Activated CD4-positive, alpha-beta T cell treated with anti-CD3 and anti-CD28 coated beads for 36 hours (primary cell): ENCODE measurements at regions of chr20 and their contacts with region 1.

Region 1: GRCh38 chr20:50958615-50959542 is at the start of gene MOCS3:
- DNase-seq: peak; percentile 89
- ATAC-seq: peak; percentile 82
- H3K4me3 Mint-ChIP-seq: peak within 1 kb of the TSS; percentile 99
- H3K27ac Mint-ChIP-seq: peak within 1 kb of the TSS; percentile 99
- H3K4me1 Mint-ChIP-seq: peaks cover 47% of the 10 kb centered on the region
- H3K27me3 Mint-ChIP-seq: no peaks in the 10 kb centered on the region
- total RNA-seq, gene MOCS3: 3.1 to 3.8 TPM

Region 2: GRCh38 chr20:50338479-50339391 is 620.1 kb before region 1 on chr20:
- CTCF ChIA-PET with region 1: no interaction called
- POLR2A ChIA-PET with region 1: no interaction called
- intact Hi-C with region 1: no loop called
- DNase-seq: peak; percentile 92
- ATAC-seq: peak; percentile 74
- H3K4me3 Mint-ChIP-seq: peak overlapping the region; percentile 55
- H3K27ac Mint-ChIP-seq: peak overlapping the region; percentile 97
- H3K4me1 Mint-ChIP-seq: peaks cover 61% of the 10 kb centered on the region
- H3K27me3 Mint-ChIP-seq: no peaks in the 10 kb centered on the region

Region 3: GRCh38 chr20:50815162-50815989 is 143.5 kb before region 1 on chr20:
- CTCF ChIA-PET with region 1: no interaction called
- POLR2A ChIA-PET with region 1: no interaction called
- intact Hi-C with region 1: loop called in 1 of 2 experiments (anchors 1 kb)
- DNase-seq: peak; percentile 57
- ATAC-seq: peak; percentile 60
- H3K4me3 Mint-ChIP-seq: peak overlapping the region; percentile 60
- H3K27ac Mint-ChIP-seq: peak overlapping the region; percentile 71
- H3K4me1 Mint-ChIP-seq: peaks cover 28% of the 10 kb centered on the region
- H3K27me3 Mint-ChIP-seq: no peaks in the 10 kb centered on the region

Region 4: GRCh38 chr20:50913690-50914375 is 45.0 kb before region 1 on chr20:
- CTCF ChIA-PET with region 1: no interaction called
- POLR2A ChIA-PET with region 1: no interaction called
- intact Hi-C with region 1: loop called in 1 of 2 experiments (anchors 1 kb)
- DNase-seq: peak; percentile 59
- ATAC-seq: peak; percentile 94
- H3K4me3 Mint-ChIP-seq: no peak overlapping the region
- H3K27ac Mint-ChIP-seq: peak overlapping the region; percentile 81
- H3K4me1 Mint-ChIP-seq: peaks cover 82% of the 10 kb centered on the region
- H3K27me3 Mint-ChIP-seq: no peaks in the 10 kb centered on the region

Region 5: DNA sequence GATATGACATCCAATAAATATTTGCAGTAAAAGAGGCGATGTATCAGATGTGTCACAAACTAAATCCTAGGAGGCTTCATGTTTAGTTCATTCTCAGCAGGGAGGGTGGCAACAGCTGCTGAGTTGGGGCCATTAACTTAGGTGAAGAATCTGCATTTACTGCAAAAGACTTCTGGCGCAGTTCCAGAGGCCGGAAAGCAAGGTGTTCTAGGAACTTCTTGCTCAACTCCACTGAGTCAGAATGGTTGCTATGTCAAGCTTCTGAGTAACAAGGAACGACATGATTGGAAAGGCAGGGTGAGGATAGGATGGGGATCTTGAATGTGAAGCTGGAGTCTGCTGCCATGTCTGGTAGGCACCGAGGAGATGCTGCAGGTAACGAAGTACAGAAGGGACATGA is 39.3 kb before region 1 on chr20:
- CTCF ChIA-PET with region 1: interaction called, 14 read pairs
- POLR2A ChIA-PET with region 1: no interaction called
- intact Hi-C with region 1: loop called in 1 of 2 experiments (anchors 1 kb)
- DNase-seq: peak; percentile 31
- ATAC-seq: no peak
- H3K4me3 Mint-ChIP-seq: no peak overlapping the region
- H3K27ac Mint-ChIP-seq: peak overlapping the region; percentile 24
- H3K4me1 Mint-ChIP-seq: peaks cover 85% of the 10 kb centered on the region
- H3K27me3 Mint-ChIP-seq: no peaks in the 10 kb centered on the region

Region 6: DNA sequence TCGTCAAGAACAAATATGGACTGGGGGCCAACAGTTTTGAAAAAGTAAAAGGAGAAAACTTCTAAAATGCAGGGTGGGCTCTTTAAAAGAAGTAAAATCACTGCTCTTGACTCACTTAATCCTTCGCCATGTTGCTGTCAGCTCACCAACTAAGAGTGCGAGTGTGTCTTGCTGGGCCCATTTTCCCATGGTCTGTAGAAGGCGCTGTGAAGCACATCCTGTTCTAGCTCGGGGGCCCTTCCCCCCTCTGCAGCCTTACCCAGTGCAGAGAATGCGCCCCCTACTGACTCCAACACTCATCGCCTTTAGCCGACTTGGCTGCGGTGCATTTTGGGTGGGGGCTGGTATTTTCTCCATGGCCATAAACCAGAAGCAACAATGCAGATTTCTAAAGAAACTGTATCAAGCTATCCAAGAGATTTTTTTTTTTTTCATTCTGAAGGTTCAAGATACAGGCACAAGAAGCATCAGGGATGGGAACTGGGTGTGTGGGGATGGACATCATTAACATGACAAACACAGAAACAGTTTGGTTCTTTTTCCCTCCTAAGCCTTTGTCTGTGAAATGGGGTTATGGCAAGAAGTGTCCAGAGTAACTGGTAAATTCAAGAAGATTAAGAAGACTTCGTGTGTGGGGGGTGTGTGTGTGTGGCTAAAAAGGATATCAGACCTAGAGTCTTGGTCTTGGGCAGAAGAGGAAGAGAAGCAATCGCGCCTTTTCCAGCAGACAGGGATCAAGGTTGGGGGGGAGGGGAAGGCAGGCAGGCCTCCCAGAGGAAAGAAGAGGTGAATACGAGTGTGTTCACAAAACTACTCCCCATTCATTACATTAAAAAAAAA is 29.4 kb before region 1 on chr20:
- CTCF ChIA-PET with region 1: interaction called, 29 read pairs
- POLR2A ChIA-PET with region 1: interaction called, 44 read pairs
- intact Hi-C with region 1: loop called (anchors 1 kb)
- DNase-seq: peak; percentile 98
- ATAC-seq: peak; percentile 80
- H3K4me3 Mint-ChIP-seq: peak overlapping the region; percentile 92
- H3K27ac Mint-ChIP-seq: peak overlapping the region; percentile 95
- H3K4me1 Mint-ChIP-seq: peaks cover 55% of the 10 kb centered on the region
- H3K27me3 Mint-ChIP-seq: no peaks in the 10 kb centered on the region

Region 7: DNA sequence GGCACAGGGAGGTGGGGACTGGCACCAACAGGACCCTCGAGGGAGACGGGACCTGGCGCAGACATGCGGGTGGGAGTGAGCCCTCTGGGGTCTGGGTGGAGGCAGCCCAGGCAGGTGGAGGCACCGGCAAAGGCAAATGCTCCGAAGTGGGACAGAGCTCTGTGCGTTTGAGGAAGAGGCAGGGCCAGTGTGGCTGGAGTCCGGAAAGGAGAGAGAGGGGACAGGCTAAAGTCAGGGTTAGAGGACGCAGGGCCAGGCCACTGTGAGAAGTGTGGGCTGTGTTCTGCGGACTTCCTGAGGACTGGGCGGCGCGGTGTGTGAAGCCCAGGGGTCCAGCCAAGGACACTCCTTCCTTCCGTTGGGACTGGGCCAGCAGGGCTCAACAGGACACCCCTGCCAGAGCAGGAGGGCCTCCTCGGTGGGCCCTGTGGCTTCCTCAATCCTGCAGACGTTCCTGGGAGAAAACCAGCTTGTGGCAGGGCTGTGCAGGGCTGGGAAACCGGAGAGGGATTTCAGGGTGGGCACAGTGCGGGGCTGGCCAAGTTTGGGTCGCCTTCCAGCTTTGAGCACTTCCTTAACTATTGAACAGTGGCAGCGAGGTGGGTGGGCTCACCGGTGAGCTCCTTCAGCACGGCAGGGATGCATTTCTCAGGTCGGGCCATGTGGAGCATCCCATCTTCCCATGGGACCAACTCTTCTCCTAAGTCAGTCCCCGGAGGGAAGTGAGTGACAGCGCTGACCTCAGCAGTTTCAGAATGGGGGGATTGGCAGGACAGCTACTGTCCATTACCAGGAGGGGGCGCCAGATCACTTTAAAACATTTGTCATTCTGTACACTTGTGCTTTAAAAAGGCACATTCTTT is 22.2 kb after region 1 on chr20:
- CTCF ChIA-PET with region 1: interaction called, 4 read pairs
- POLR2A ChIA-PET with region 1: interaction called, 8 read pairs
- intact Hi-C with region 1: loop called in 1 of 2 experiments (anchors 1 kb)
- DNase-seq: peak; percentile 84
- ATAC-seq: no peak
- H3K4me3 Mint-ChIP-seq: no peak overlapping the region
- H3K27ac Mint-ChIP-seq: peak overlapping the region; percentile 90
- H3K4me1 Mint-ChIP-seq: peaks cover 20% of the 10 kb centered on the region
- H3K27me3 Mint-ChIP-seq: peaks cover 26% of the 10 kb centered on the region